Esophagus squamous epithelium (tissue), 5 donors: ENCODE measurements at regions of chr9 and their contacts with region 1.

Region 1: GRCh38 chr9:84315278-84315877 is 25.2 kb downstream of the SLC28A3 start:
- DNase-seq: no peak
- H3K4me3 ChIP-seq: no peak overlapping the region
- H3K27ac ChIP-seq: no peak overlapping the region
- H3K4me1 ChIP-seq: peaks cover 0 to 15% (median 3%) of the 10 kb centered on the region in 3 donors
- H3K27me3 ChIP-seq: no peaks in the 10 kb centered on the region
- CTCF ChIP-seq: peak; percentile 67 to 84 (median 79)
- POLR2A ChIP-seq: no peak

Region 2: GRCh38 chr9:83937911-83938323 is 377.5 kb before region 1 on chr9:
- intact Hi-C with region 1: loop called (anchors 10 kb)
- DNase-seq: no peak
- H3K4me3 ChIP-seq: no peak overlapping the region
- H3K27ac ChIP-seq: no peak overlapping the region
- H3K4me1 ChIP-seq: peaks cover 0 to 23% (median 8%) of the 10 kb centered on the region in 3 donors
- H3K27me3 ChIP-seq: no peaks in the 10 kb centered on the region
- CTCF ChIP-seq: peak; percentile 45 to 75 (median 63)
- POLR2A ChIP-seq: no peak

Region 3: GRCh38 chr9:84244850-84245249 is 70.5 kb before region 1 on chr9:
- intact Hi-C with region 1: no loop called
- DNase-seq: no peak
- H3K4me3 ChIP-seq: no peak overlapping the region
- H3K27ac ChIP-seq: no peak overlapping the region
- H3K4me1 ChIP-seq: no peaks in the 10 kb centered on the region
- H3K27me3 ChIP-seq: no peaks in the 10 kb centered on the region
- CTCF ChIP-seq: no peak
- POLR2A ChIP-seq: no peak

Region 4: GRCh38 chr9:84254972-84255371 is 60.4 kb before region 1 on chr9:
- intact Hi-C with region 1: loop called (anchors 5 kb)
- DNase-seq: no peak
- H3K4me3 ChIP-seq: no peak overlapping the region
- H3K27ac ChIP-seq: no peak overlapping the region
- H3K4me1 ChIP-seq: peaks cover 0 to 13% (median 0%) of the 10 kb centered on the region in 3 donors
- H3K27me3 ChIP-seq: no peaks in the 10 kb centered on the region
- CTCF ChIP-seq: no peak
- POLR2A ChIP-seq: no peak